Activated B cell treated with CpG ODN at 0.5 μM for 24 hours (primary cell): ENCODE measurements at regions of chr5 and their contacts with region 1.

Region 1: DNA sequence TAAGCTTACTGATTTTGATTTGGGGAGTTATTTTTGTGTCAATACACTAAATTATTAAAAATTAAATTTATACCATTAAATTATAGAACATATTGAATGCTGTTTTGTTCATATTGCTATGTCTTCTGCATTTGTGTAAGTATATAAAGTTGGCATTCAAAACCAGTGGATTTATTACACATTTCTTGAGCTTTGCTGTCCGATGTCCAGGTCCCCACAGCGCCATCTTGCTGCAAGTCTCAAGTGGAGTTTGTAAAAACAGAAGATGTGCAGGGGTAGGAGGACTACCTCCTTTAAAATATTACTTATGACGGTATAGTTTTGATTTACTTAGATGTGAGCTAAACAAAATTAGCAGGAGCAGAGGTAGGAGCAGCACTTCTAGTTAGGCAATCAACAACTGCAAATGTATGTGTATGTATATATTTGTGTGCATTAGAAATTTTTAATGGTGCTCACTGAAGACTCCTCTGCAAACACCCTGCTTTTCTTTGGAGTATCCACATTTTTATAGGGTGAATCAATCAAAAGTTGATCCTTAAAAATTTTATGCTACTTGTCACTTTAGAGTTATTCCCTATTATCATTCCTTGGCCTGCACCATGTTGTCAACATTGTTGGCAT is 37.4 kb downstream of the CPEB4 start:
- DNase-seq: no peak
- ATAC-seq: peak; percentile 54
- H3K4me3 Mint-ChIP-seq: no peak overlapping the region
- H3K27ac Mint-ChIP-seq: no peak overlapping the region
- H3K4me1 Mint-ChIP-seq: peaks cover 25% of the 10 kb centered on the region
- H3K27me3 Mint-ChIP-seq: no peaks in the 10 kb centered on the region
- CTCF ChIP-seq: no peak

Region 2: GRCh38 chr5:173625696-173626504 is 299.7 kb before region 1 on chr5:
- CTCF ChIA-PET with region 1: interaction called, 93 read pairs
- POLR2A ChIA-PET with region 1: no interaction called
- intact Hi-C with region 1: loop called (anchors 1 kb)
- DNase-seq: no peak
- ATAC-seq: peak; percentile 81
- H3K4me3 Mint-ChIP-seq: peak overlapping the region; percentile 4
- H3K27ac Mint-ChIP-seq: no peak overlapping the region
- H3K4me1 Mint-ChIP-seq: peaks cover 18% of the 10 kb centered on the region
- H3K27me3 Mint-ChIP-seq: peaks cover 3% of the 10 kb centered on the region
- CTCF ChIP-seq: no peak

Region 3: DNA sequence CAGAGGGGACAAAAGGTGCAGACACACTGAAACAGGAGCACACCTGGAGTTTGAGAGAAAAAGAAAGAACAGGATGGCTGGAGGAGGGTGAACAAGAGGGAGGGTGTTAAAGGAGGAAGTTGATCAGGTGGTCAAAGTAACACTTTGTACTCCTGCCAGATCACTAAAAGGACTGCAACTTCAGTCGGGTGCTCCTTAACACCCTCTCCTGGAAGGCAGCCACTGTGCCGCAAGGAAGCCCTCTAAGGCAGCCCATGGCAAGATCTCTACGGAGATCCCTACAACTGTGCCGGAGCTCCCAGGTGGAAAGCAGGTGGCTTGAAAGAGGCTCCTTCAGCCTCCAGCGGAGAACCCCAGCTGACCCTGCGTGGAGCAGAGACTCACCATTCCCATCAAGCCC is 674.4 kb after region 1 on chr5:
- CTCF ChIA-PET with region 1: no interaction called
- POLR2A ChIA-PET with region 1: no interaction called
- intact Hi-C with region 1: no loop called
- DNase-seq: no peak
- ATAC-seq: no peak
- H3K4me3 Mint-ChIP-seq: no peak overlapping the region
- H3K27ac Mint-ChIP-seq: no peak overlapping the region
- H3K4me1 Mint-ChIP-seq: no peaks in the 10 kb centered on the region
- H3K27me3 Mint-ChIP-seq: peaks cover 3% of the 10 kb centered on the region
- CTCF ChIP-seq: no peak